Ovary (tissue), 10 donors: ENCODE measurements at regions of chr3 and their contacts with region 1.

Region 1: DNA sequence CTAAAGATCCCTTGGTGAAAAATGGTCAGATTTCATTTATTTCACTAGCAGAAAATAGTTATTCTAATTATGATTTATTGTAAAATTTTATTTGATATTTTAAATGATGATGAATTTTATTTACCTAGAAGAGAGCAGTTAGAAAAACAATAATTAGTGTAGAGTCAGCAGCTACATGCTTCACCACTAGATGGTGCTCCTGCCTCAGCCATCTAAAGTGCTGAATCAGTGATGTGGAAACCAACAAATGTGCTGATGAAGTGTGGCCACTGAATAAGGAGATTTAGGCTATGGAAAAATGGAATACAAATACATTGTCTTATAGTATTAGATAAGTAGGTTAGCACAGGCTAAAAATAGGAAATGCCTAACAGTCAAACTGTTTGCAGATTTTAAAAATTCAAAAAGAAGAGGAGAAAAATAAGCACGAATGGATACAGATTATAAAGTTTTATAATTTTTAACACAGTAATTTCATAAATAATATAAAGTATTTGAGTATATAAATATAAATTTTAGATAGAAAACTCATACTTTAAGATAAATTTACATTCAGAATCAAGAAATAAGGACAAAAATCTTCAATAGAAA is 109.8 kb downstream of the PPP2R3A start:
- DNase-seq: peak; percentile 65 to 83 (median 74)
- H3K4me3 ChIP-seq: no peak overlapping the region
- H3K27ac ChIP-seq: no peak overlapping the region
- H3K4me1 ChIP-seq: peaks cover 2% of the 10 kb centered on the region
- H3K27me3 ChIP-seq: no peaks in the 10 kb centered on the region
- CTCF ChIP-seq: peak; percentile 69 to 95 (median 94)
- EP300 ChIP-seq: no peak
- POLR2A ChIP-seq: no peak

Region 2: GRCh38 chr3:136120373-136121348 is 45.3 kb after region 1 on chr3:
- intact Hi-C with region 1: no loop called
- DNase-seq: no peak
- H3K4me3 ChIP-seq: no peak overlapping the region
- H3K27ac ChIP-seq: no peak overlapping the region
- H3K4me1 ChIP-seq: no peaks in the 10 kb centered on the region
- H3K27me3 ChIP-seq: no peaks in the 10 kb centered on the region
- CTCF ChIP-seq: no peak
- EP300 ChIP-seq: no peak
- POLR2A ChIP-seq: no peak

Region 3: GRCh38 chr3:136250226-136250902 is 175.1 kb after region 1 on chr3 and contains the start of gene PCCB:
- intact Hi-C with region 1: loop called in 1 of 4 experiments (anchors 5 kb)
- DNase-seq: peak; percentile 92 to 96 (median 93)
- H3K4me3 ChIP-seq: peak within 1 kb of the TSS; percentile 72
- H3K27ac ChIP-seq: peak within 1 kb of the TSS; percentile 4 to 79
- H3K4me1 ChIP-seq: peaks cover 1% of the 10 kb centered on the region
- H3K27me3 ChIP-seq: no peaks in the 10 kb centered on the region
- CTCF ChIP-seq: peak; percentile 95 to 99 (median 96)
- EP300 ChIP-seq: no peak
- POLR2A ChIP-seq: peak; percentile 63
- total RNA-seq, gene PCCB: 8.2 to 26.5 (median 22.1) TPM

Region 4: DNA sequence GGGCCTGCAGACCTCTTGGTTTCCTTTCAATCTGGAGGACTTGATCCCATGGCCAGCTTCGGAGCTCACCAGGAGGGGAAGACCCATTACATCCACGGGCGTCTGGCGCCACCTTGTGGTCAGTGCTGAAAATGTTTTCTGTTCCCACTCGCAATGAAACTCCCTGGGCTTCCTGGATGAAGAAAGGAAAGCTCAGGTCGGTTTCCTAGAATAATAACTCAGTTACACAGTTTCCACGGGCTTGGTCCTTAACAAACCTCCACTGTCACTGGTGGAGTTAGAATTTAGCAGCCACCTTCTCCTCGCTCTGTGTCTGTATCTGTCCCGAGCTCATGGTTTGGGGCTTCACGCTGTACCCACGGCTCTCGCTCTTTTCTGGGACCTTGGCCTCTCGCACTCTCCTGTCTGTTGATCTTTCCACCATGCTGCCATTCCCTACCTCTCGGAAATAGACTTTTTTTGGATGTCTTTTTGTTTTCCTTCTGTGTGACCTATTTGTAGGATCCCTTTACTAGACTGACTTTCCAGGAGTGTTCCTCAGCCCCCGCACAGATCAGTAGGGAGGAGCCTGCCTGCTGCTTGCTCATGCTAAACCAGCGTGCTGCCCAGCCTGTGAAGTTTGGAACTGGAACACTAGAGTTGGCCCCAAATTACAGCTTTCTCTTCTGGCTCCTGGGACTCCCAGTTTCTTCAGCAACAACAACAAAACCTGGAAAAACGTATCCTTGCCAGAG is 938.8 kb after region 1 on chr3:
- intact Hi-C with region 1: loop called (anchors 2 to 10 kb)
- DNase-seq: peak; percentile 87 to 94 (median 93)
- H3K4me3 ChIP-seq: peak overlapping the region; percentile 40
- H3K27ac ChIP-seq: peak overlapping the region; percentile 32 to 81
- H3K4me1 ChIP-seq: peaks cover 2% of the 10 kb centered on the region
- H3K27me3 ChIP-seq: no peaks in the 10 kb centered on the region
- CTCF ChIP-seq: peak; percentile 90
- EP300 ChIP-seq: no peak
- POLR2A ChIP-seq: no peak